Dorsolateral prefrontal cortex (tissue), 120 donors: ENCODE measurements at regions of chr5 and their contacts with region 1.

Region 1: GRCh38 chr5:124748687-124749594 is 2.5 kb upstream of the ZNF608 start:
- DNase-seq: peak; percentile 58 to 96 (median 86)
- H3K4me3 ChIP-seq: peak overlapping the region; percentile 55 to 92 (median 80)
- H3K27ac ChIP-seq: peak overlapping the region; percentile 89 to 99 (median 97)
- H3K27me3 ChIP-seq: peaks cover 0 to 4% (median 0%) of the 10 kb centered on the region in 45 donors
- CTCF ChIP-seq: peak in 9 of 56 donors; percentile 5 to 28 (median 10)

Region 2: DNA sequence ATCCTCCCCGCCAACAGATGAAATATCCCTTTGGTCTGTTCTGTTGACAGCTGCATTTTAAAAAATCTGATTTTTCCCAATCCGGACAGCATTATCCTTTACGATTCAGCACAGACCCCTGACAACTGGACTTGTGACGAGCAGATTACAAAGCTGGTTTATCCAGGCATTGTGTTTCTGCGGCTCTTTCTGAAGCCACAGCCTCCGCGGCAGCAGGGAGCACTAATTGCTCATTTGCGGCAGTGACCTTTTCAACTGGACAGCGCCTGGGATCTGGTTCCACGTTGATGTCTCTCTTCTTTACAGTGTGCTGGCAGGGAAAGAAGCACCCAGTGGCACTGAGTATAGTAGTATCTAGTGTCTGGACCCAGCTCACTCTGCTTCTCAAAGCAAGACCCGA is 353.7 kb before region 1 on chr5:
- intact Hi-C with region 1: loop called (anchors 10 kb)
- DNase-seq: peak; percentile 13 to 75 (median 58)
- H3K4me3 ChIP-seq: peak overlapping the region in 36 of 59 donors; percentile 0 to 51 (median 19)
- H3K27ac ChIP-seq: peak overlapping the region; percentile 42 to 95 (median 85)
- H3K27me3 ChIP-seq: no peaks in the 10 kb centered on the region
- CTCF ChIP-seq: peak in 11 of 56 donors; percentile 3 to 37 (median 24)

Region 3: GRCh38 chr5:124461941-124462340 is 287.0 kb before region 1 on chr5:
- intact Hi-C with region 1: loop called (anchors 10 kb)
- DNase-seq: no peak
- H3K4me3 ChIP-seq: peak overlapping the region in 23 of 59 donors; percentile 1 to 41 (median 15)
- H3K27ac ChIP-seq: peak overlapping the region in 58 of 59 donors; percentile 47 to 92 (median 80)
- H3K27me3 ChIP-seq: no peaks in the 10 kb centered on the region
- CTCF ChIP-seq: no peak

Region 4: GRCh38 chr5:124649491-124650146 is 99.3 kb before region 1 on chr5:
- intact Hi-C with region 1: loop called (anchors 2 to 5 kb)
- DNase-seq: peak in 3 of 10 donors; percentile 41 to 49 (median 48)
- H3K4me3 ChIP-seq: peak overlapping the region in 32 of 59 donors; percentile 1 to 76 (median 16)
- H3K27ac ChIP-seq: peak overlapping the region in 54 of 59 donors; percentile 7 to 97 (median 90)
- H3K27me3 ChIP-seq: no peaks in the 10 kb centered on the region
- CTCF ChIP-seq: peak in 2 of 56 donors; percentile 5 to 16

Region 5: DNA sequence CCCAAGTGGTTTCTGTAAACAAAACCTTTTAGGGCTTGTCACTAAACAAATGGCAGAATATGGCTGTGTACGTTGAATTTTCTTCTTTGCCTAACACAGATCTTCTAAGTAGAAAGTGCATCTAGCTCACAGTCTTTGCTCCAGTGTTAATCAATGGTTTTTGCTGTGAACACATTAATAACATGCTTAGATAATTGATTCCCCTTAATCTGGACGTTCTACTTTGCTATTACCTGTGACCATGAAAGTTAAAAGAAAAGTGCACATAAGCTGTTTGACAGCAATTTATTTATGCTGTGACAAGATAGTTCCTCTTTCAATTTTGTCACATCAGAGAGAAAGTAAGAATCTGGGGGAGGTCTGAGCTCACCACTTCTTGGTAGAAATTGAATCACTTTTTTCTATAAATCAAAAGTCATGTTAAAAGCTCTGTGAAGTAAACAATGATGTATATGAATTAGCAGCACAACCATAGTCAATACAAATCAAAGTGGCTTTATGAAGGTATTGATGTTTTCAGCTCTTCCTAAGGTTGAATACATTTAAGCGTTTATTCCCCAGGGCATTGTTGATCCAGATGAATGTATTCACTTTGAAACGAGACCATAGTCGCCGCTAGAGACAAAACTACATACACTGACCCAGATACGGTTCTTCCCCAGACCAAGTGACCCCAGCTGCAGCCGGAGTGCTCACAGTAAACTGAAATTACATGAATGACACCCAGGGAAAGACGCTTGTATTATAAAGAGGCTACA is 172.1 kb after region 1 on chr5:
- intact Hi-C with region 1: loop called in 1 of 2 experiments (anchors 5 kb)
- DNase-seq: no peak
- H3K4me3 ChIP-seq: peak overlapping the region in 7 of 59 donors; percentile 2 to 17 (median 8)
- H3K27ac ChIP-seq: peak overlapping the region in 58 of 59 donors; percentile 3 to 96 (median 88)
- H3K27me3 ChIP-seq: no peaks in the 10 kb centered on the region
- CTCF ChIP-seq: peak in 3 of 56 donors; percentile 13 to 21 (median 14)

Region 6: DNA sequence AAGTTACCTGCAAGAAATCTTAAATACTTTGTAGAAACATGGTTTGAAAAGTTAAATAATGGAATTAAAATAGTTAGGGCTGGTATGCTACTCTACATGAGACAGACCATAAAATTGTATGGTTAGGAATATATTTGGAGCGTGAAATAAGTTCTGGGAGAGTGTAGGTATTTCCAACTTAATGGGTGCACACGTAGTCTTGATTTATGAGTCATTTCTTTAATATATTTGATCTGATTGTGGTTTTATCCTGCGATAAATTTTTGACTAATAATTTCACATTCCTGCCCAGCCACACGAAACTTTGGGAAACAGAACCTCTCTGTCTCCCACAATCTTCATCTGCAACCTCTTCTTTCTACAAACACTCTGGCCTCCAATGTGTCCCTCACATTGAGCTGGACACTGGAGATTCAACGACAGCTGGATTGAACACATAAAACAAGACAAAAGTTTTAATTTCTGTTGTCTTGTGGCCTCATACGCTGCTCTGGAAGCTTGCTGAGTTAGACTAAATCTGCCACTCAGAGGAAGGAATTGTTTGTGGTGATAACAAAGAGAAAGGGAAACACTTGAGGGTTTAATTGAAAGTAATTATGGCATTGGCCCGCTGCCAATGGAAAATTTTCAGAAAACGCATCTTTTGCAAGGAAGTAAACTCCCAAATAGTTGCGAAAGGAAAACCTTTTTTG is 199.3 kb after region 1 on chr5:
- intact Hi-C with region 1: no loop called
- DNase-seq: no peak
- H3K4me3 ChIP-seq: no peak overlapping the region
- H3K27ac ChIP-seq: peak overlapping the region in 1 of 59 donors; percentile 23
- H3K27me3 ChIP-seq: no peaks in the 10 kb centered on the region
- CTCF ChIP-seq: peak in 1 of 56 donors; percentile 18

Region 7: GRCh38 chr5:125484742-125485641 is 736.1 kb after region 1 on chr5:
- intact Hi-C with region 1: loop called in 1 of 2 experiments (anchors 5 kb)
- DNase-seq: peak; percentile 22 to 94 (median 84)
- H3K4me3 ChIP-seq: peak overlapping the region in 31 of 59 donors; percentile 1 to 39 (median 12)
- H3K27ac ChIP-seq: peak overlapping the region; percentile 88 to 99 (median 96)
- H3K27me3 ChIP-seq: no peaks in the 10 kb centered on the region
- CTCF ChIP-seq: peak in 5 of 56 donors; percentile 6 to 21 (median 13)